ENCODE measurements at regions of chr10 and their contacts with region 1.

Region 1: GRCh38 chr10:8628186-8628759 is 573.8 kb downstream of the GATA3 start:
- DNase-seq: no peak
- ATAC-seq: no peak

Region 2: GRCh38 chr10:8691498-8692017 is 63.3 kb after region 1 on chr10:
- intact Hi-C with region 1: no loop called
- DNase-seq: no peak
- ATAC-seq: no peak

Region 3: GRCh38 chr10:8811201-8811600 is 182.9 kb after region 1 on chr10:
- intact Hi-C with region 1: no loop called
- DNase-seq: no peak
- ATAC-seq: no peak

Region 4: DNA sequence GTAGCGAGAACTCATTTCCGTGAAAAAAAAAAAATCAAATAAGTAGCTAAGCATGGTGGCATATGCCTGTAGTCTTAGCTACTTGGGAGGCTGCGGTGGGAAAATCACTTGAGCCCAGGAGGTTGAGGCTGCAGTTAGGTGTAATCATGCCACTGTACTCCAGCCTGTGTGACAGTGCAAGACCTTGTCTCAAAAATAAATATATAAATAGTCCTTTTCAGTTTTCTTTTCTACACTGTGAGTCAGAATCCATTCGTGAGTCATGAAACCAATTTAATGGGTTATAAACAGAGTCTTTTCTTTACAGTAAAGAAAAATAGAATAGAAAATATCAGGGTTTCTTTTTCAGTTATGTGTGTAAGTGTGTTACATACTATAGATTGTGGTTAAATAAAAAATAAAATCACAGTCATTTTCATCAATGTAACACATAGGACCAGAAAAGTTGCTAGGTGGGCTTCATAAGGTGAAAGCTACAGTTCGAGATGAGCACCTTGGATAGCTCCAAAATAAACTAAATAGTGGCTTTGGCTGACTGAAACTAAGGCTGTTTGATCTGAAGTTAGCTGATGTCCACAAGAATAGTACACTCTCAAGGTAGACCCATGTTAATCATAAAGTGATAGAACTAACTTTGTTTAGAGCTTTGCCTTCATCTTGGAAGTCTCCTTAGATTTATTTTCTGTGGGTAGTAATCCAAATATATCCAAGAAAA is 207.3 kb after region 1 on chr10:
- intact Hi-C with region 1: loop called (anchors 5 kb)
- DNase-seq: no peak
- ATAC-seq: no peak

Measured in sciatic nerve (tissue), 2 donors.